ENCODE measurements at regions of chr16 and their contacts with region 1.

Region 1: GRCh38 chr16:11546608-11547061 is 40.1 kb downstream of the LITAF start:
- DNase-seq: no peak
- H3K4me3 ChIP-seq: no peak overlapping the region
- H3K27ac ChIP-seq: peak overlapping the region; percentile 54 to 68 (median 60)
- H3K4me1 ChIP-seq: peaks cover 0 to 4% (median 2%) of the 10 kb centered on the region in 4 donors
- H3K27me3 ChIP-seq: no peaks in the 10 kb centered on the region
- CTCF ChIP-seq: no peak
- EP300 ChIP-seq: no peak
- POLR2A ChIP-seq: no peak

Region 2: GRCh38 chr16:10964039-10964890 is 582.4 kb before region 1 on chr16:
- in situ Hi-C with region 1: loop called in 1 of 4 experiments (anchors 25 kb)
- intact Hi-C with region 1: no loop called
- DNase-seq: peak; percentile 86
- H3K4me3 ChIP-seq: no peak overlapping the region
- H3K27ac ChIP-seq: peak overlapping the region in 3 of 4 donors; percentile 8 to 56 (median 55)
- H3K4me1 ChIP-seq: peaks cover 0 to 11% (median 5%) of the 10 kb centered on the region in 4 donors
- H3K27me3 ChIP-seq: no peaks in the 10 kb centered on the region
- CTCF ChIP-seq: peak; percentile 90 to 96 (median 95)
- EP300 ChIP-seq: no peak
- POLR2A ChIP-seq: no peak

Region 3: DNA sequence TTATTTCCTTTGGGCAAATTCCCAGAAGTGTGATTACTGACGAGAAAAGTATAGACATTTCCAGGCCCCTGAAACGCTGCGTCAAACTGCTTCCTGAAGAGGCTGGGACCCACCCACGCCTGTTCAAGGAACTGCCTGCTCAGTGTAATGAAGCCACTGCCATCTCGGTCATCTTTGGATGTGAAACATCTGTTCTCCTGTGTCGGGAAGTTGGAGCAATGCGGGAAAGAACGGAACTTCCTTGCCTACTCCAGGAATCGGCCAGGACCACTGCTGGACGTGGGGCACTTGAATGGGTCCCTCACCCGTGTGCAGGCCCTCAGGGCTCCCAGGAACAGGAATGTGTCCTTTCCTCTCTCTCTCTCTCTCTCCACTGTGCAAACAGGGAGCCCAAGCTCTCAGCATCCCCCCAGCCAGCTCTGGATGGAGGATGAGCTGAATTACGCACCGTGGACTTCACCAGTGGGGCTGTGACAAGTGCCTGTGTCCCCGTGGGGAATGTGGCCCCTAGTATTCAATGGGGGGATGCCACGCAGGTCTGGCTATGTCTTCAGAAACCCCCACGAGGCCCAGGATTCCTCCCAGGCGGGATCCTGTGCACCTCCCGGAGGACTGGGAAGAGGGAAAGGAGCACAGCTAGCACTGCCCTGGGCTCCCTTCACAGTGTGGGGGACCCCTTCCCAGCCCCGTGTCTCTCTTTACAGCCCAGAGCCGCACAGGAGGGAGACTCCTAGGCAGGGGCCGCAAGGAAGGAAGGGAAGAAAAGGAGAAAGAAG is 58.3 kb after region 1 on chr16:
- in situ Hi-C with region 1: no loop called
- intact Hi-C with region 1: no loop called
- DNase-seq: peak; percentile 54
- H3K4me3 ChIP-seq: no peak overlapping the region
- H3K27ac ChIP-seq: peak overlapping the region; percentile 54 to 64 (median 62)
- H3K4me1 ChIP-seq: peaks cover 0 to 29% (median 2%) of the 10 kb centered on the region in 4 donors
- H3K27me3 ChIP-seq: no peaks in the 10 kb centered on the region
- CTCF ChIP-seq: no peak
- EP300 ChIP-seq: peak; percentile 36
- POLR2A ChIP-seq: no peak

Region 4: GRCh38 chr16:11639925-11640899 is 93.6 kb after region 1 on chr16:
- in situ Hi-C with region 1: loop called in 1 of 4 experiments (anchors 10 kb)
- intact Hi-C with region 1: no loop called
- DNase-seq: peak; percentile 62
- H3K4me3 ChIP-seq: no peak overlapping the region
- H3K27ac ChIP-seq: peak overlapping the region; percentile 71 to 83 (median 79)
- H3K4me1 ChIP-seq: peaks cover 5 to 30% (median 17%) of the 10 kb centered on the region in 4 donors
- H3K27me3 ChIP-seq: no peaks in the 10 kb centered on the region
- CTCF ChIP-seq: no peak
- EP300 ChIP-seq: no peak
- POLR2A ChIP-seq: peak; percentile 41

Region 5: GRCh38 chr16:11715246-11715947 is 168.8 kb after region 1 on chr16:
- in situ Hi-C with region 1: loop called in 1 of 4 experiments (anchors 10 kb)
- intact Hi-C with region 1: no loop called
- DNase-seq: no peak
- H3K4me3 ChIP-seq: no peak overlapping the region
- H3K27ac ChIP-seq: no peak overlapping the region
- H3K4me1 ChIP-seq: peaks cover 0 to 28% (median 2%) of the 10 kb centered on the region in 4 donors
- H3K27me3 ChIP-seq: no peaks in the 10 kb centered on the region
- CTCF ChIP-seq: no peak
- EP300 ChIP-seq: no peak
- POLR2A ChIP-seq: no peak

Region 6: DNA sequence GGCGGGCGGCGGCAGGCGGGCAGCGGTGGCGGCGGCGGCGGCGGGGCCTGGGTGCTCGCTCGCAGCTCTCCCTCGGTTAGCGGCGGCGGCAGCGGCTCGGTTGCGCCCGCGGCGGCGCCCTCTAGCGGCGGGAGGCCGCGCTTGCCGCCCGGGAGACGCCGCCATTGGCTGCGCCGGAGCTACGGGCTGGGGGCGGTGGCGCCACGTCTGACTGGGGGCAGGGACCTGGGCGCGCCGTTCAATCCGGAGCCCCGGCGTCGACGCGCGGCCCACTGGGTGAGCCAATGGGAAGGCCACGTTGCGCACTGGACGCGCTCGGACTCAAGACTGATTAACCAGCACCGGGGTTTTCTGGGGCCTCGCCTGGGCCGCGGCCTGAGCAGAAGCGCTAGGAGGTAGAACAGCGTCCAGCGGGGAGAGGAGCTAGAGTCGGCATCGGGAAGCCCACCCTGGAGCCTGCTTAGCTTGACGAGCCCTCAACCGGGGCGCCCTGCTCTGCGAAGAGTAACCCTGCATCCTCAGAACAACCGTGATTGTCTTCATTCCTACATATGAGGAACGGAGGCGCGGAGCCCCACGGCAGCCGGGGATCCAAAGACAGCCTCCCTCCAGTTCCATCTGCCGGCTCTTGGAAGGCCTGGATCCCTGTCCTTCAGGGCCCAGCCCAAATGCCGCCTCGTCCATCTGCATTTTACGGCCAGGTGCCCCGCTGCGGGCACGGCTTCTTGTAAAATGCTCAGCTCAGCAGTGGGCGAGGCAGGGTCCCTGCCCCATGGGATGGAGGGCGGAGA is 250.7 kb after region 1 on chr16 and contains the start of gene ZC3H7A:
- in situ Hi-C with region 1: loop called in 3 of 4 experiments (anchors 25 kb)
- intact Hi-C with region 1: no loop called
- DNase-seq: peak; percentile 97
- H3K4me3 ChIP-seq: peak within 1 kb of the TSS; percentile 79 to 95 (median 90)
- H3K27ac ChIP-seq: peak within 1 kb of the TSS; percentile 95 to 100 (median 97)
- H3K4me1 ChIP-seq: peaks cover 32 to 66% (median 49%) of the 10 kb centered on the region in 4 donors
- H3K27me3 ChIP-seq: no peaks in the 10 kb centered on the region
- CTCF ChIP-seq: peak; percentile 33 to 84 (median 66)
- EP300 ChIP-seq: no peak
- POLR2A ChIP-seq: peak; percentile 98
- total RNA-seq, gene ZC3H7A: 38.1 to 92.0 (median 63.3) TPM